Activated T-helper 1 cell treated with anti-CD3 and anti-CD28 coated beads, Interleukin-12 subunit alpha, Interleukin-12 subunit beta, Interleukin-2, Interleukin-4 antibody, amounts not matched to agents 30 ng/mL and 10 ng/mL and 1 ng/mL, durations not matched to agents 14 hours and 24 hours and 36 hours (primary cell): ENCODE measurements at regions of chr22 and their contacts with region 1.

Region 1: GRCh38 chr22:40436505-40437451 is 66.4 kb downstream of the SGSM3 start:
- DNase-seq: no peak
- H3K4me3 Mint-ChIP-seq: no peak overlapping the region
- H3K27ac Mint-ChIP-seq: peak overlapping the region; percentile 51
- H3K4me1 Mint-ChIP-seq: peaks cover 45% of the 10 kb centered on the region
- H3K27me3 Mint-ChIP-seq: no peaks in the 10 kb centered on the region

Region 2: DNA sequence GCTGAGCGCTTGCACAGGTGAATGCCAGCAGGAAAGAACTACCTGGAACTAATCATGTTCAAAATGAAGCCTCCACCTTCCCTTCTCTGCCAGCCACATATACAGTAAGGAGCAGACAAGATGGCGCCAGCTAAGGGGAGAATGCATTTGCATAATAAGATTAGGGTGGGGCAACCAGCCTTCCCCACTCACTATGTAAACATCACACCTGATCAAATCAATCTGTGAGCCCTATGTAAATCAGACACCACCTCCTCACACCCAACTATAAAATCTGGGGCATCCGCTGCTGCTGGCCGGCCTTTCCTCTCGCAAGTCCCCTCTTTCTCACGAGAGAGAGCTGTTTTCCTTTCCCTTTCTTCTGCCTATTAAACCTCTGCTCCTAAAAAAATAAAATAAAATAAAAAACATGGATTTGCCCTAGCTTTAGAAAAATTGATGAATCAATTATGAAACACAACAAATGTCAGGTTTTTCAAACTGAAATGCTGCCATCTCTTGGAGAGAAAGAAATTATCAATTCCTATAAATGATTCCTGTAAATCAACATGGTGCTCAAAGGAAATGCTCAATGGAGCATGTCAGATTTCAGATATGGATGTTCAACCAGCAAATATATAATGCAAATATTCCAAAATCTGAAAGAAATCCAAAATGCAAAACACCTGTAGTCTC is 42.5 kb after region 1 on chr22:
- intact Hi-C with region 1: loop called (anchors 1 kb)
- DNase-seq: no peak
- H3K4me3 Mint-ChIP-seq: no peak overlapping the region
- H3K27ac Mint-ChIP-seq: no peak overlapping the region
- H3K4me1 Mint-ChIP-seq: peaks cover 30% of the 10 kb centered on the region
- H3K27me3 Mint-ChIP-seq: no peaks in the 10 kb centered on the region

Region 3: GRCh38 chr22:40487663-40488249 is 51.0 kb after region 1 on chr22:
- intact Hi-C with region 1: loop called (anchors 1 kb)
- DNase-seq: no peak
- H3K4me3 Mint-ChIP-seq: no peak overlapping the region
- H3K27ac Mint-ChIP-seq: no peak overlapping the region
- H3K4me1 Mint-ChIP-seq: peaks cover 39% of the 10 kb centered on the region
- H3K27me3 Mint-ChIP-seq: no peaks in the 10 kb centered on the region

Region 4: DNA sequence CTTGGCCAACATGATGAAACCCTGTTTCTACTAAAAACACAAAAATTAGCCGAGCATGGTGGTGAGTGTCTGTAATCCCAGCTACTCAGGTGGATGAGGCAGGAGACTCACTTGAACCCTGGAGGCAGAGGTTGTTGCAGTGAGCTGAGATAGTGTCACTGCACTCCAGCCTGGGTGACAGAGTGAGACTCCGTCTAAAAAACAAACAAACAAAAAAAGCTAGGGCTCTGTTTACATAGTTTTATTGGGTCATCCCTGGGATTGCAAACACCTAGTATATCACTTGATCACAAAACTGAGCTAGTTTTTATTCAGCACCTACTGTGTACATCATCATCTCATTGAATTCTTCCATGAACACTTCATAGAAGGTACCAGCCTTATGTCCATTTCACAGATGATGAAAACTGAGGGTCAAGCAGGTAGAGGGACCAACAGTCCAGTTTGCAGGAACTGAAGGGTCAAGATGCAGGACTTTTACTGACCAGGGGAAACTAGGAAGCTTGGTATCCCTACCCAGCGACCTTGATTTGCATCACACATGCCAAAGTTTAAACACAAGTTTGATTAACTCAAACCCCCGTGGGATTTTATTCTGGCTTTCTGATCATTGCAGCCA is 208.9 kb after region 1 on chr22:
- intact Hi-C with region 1: loop called (anchors 1 kb)
- DNase-seq: no peak
- H3K4me3 Mint-ChIP-seq: no peak overlapping the region
- H3K27ac Mint-ChIP-seq: no peak overlapping the region
- H3K4me1 Mint-ChIP-seq: peaks cover 20% of the 10 kb centered on the region
- H3K27me3 Mint-ChIP-seq: no peaks in the 10 kb centered on the region

Region 5: GRCh38 chr22:40975366-40975765 is 538.6 kb after region 1 on chr22:
- intact Hi-C with region 1: no loop called
- DNase-seq: no peak
- H3K4me3 Mint-ChIP-seq: no peak overlapping the region
- H3K27ac Mint-ChIP-seq: no peak overlapping the region
- H3K4me1 Mint-ChIP-seq: no peaks in the 10 kb centered on the region
- H3K27me3 Mint-ChIP-seq: no peaks in the 10 kb centered on the region